ENCODE measurements at regions of chr6 and their contacts with region 1.

Region 1: GRCh38 chr6:147506704-147507114 is 1.8 kb upstream of the SAMD5 start:
- DNase-seq: peak; percentile 57
- H3K4me3 ChIP-seq: peak overlapping the region; percentile 76 to 96 (median 87)
- H3K27ac ChIP-seq: peak overlapping the region; percentile 7
- H3K4me1 ChIP-seq: peaks cover 26% of the 10 kb centered on the region
- H3K27me3 ChIP-seq: no peaks in the 10 kb centered on the region
- CTCF ChIP-seq: peak; percentile 78 to 85
- POLR2A ChIP-seq: no peak

Region 2: GRCh38 chr6:147774856-147775255 is 268.1 kb after region 1 on chr6:
- CTCF ChIA-PET with region 1: no interaction called
- POLR2A ChIA-PET with region 1: no interaction called
- dilution Hi-C with region 1: no loop called
- intact Hi-C with region 1: loop called (anchors 5 kb)
- DNase-seq: no peak
- H3K4me3 ChIP-seq: no peak overlapping the region
- H3K27ac ChIP-seq: no peak overlapping the region
- H3K4me1 ChIP-seq: no peaks in the 10 kb centered on the region
- H3K27me3 ChIP-seq: no peaks in the 10 kb centered on the region
- CTCF ChIP-seq: peak; percentile 16 to 32
- POLR2A ChIP-seq: no peak

Region 3: GRCh38 chr6:148021699-148022098 is 515.0 kb after region 1 on chr6:
- CTCF ChIA-PET with region 1: interaction called, 3 read pairs
- POLR2A ChIA-PET with region 1: no interaction called
- dilution Hi-C with region 1: no loop called
- intact Hi-C with region 1: loop called (anchors 1 kb)
- DNase-seq: peak; percentile 91
- H3K4me3 ChIP-seq: peak overlapping the region in 2 of 3 experiments; percentile 3 to 18
- H3K27ac ChIP-seq: peak overlapping the region; percentile 87
- H3K4me1 ChIP-seq: peaks cover 18% of the 10 kb centered on the region
- H3K27me3 ChIP-seq: no peaks in the 10 kb centered on the region
- CTCF ChIP-seq: no peak
- POLR2A ChIP-seq: no peak

Region 4: GRCh38 chr6:148144917-148145521 is 638.3 kb after region 1 on chr6:
- CTCF ChIA-PET with region 1: interaction called, 28 read pairs
- POLR2A ChIA-PET with region 1: no interaction called
- dilution Hi-C with region 1: loop called (anchors 25 kb)
- intact Hi-C with region 1: loop called (anchors 1 kb)
- DNase-seq: peak; percentile 74
- H3K4me3 ChIP-seq: no peak overlapping the region
- H3K27ac ChIP-seq: peak overlapping the region; percentile 99
- H3K4me1 ChIP-seq: peaks cover 41% of the 10 kb centered on the region
- H3K27me3 ChIP-seq: no peaks in the 10 kb centered on the region
- CTCF ChIP-seq: peak; percentile 75 to 81
- POLR2A ChIP-seq: no peak

Region 5: GRCh38 chr6:148304976-148305375 is 798.3 kb after region 1 on chr6:
- CTCF ChIA-PET with region 1: no interaction called
- POLR2A ChIA-PET with region 1: no interaction called
- dilution Hi-C with region 1: no loop called
- intact Hi-C with region 1: loop called (anchors 1 kb)
- DNase-seq: peak; percentile 97
- H3K4me3 ChIP-seq: no peak overlapping the region
- H3K27ac ChIP-seq: peak overlapping the region; percentile 95
- H3K4me1 ChIP-seq: peaks cover 24% of the 10 kb centered on the region
- H3K27me3 ChIP-seq: no peaks in the 10 kb centered on the region
- CTCF ChIP-seq: no peak
- POLR2A ChIP-seq: no peak

Region 6: GRCh38 chr6:148464319-148465010 is 957.8 kb after region 1 on chr6:
- CTCF ChIA-PET with region 1: interaction called, 3 read pairs
- POLR2A ChIA-PET with region 1: no interaction called
- dilution Hi-C with region 1: no loop called
- intact Hi-C with region 1: loop called (anchors 1 kb)
- DNase-seq: peak; percentile 86
- H3K4me3 ChIP-seq: no peak overlapping the region
- H3K27ac ChIP-seq: peak overlapping the region; percentile 42
- H3K4me1 ChIP-seq: peaks cover 37% of the 10 kb centered on the region
- H3K27me3 ChIP-seq: no peaks in the 10 kb centered on the region
- CTCF ChIP-seq: peak; percentile 76 to 94
- POLR2A ChIP-seq: no peak